Mammary epithelial cell (primary cell): ENCODE measurements at regions of chr18 and their contacts with region 1.

Region 1: GRCh38 chr18:12092398-12093229 is 1.0 kb upstream of the ANKRD62 start:
- DNase-seq: no peak
- H3K4me3 ChIP-seq: no peak overlapping the region
- H3K27ac ChIP-seq: no peak overlapping the region
- H3K4me1 ChIP-seq: no peaks in the 10 kb centered on the region
- H3K27me3 ChIP-seq: no peaks in the 10 kb centered on the region
- CTCF ChIP-seq: peak in 1 of 2 donors; percentile 38

Region 2: DNA sequence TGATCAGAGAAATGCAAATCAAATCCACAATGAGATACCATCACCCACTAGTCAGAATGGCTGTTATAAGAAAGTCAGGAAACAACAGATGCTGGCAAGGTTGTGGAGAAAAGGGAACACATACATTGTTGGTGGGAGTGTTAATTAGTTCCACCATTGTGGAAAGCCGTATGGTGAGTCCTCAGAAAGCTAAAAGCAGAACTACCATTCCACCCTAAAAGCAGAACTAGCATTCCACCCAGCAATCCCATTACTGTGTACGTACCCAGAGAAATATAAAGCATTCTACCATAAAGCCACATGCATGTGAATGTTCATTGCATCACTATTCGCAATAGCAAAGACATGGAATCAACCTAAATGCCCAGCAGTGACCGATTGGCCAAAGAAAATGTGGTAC is 61.7 kb after region 1 on chr18:
- CTCF ChIA-PET with region 1: no interaction called
- dilution Hi-C with region 1: loop called (anchors 5 kb)
- in situ Hi-C with region 1: no loop called
- intact Hi-C with region 1: no loop called
- DNase-seq: no peak
- H3K4me3 ChIP-seq: no peak overlapping the region
- H3K27ac ChIP-seq: no peak overlapping the region
- H3K4me1 ChIP-seq: no peaks in the 10 kb centered on the region
- H3K27me3 ChIP-seq: peaks cover 2% of the 10 kb centered on the region
- CTCF ChIP-seq: no peak

Region 3: DNA sequence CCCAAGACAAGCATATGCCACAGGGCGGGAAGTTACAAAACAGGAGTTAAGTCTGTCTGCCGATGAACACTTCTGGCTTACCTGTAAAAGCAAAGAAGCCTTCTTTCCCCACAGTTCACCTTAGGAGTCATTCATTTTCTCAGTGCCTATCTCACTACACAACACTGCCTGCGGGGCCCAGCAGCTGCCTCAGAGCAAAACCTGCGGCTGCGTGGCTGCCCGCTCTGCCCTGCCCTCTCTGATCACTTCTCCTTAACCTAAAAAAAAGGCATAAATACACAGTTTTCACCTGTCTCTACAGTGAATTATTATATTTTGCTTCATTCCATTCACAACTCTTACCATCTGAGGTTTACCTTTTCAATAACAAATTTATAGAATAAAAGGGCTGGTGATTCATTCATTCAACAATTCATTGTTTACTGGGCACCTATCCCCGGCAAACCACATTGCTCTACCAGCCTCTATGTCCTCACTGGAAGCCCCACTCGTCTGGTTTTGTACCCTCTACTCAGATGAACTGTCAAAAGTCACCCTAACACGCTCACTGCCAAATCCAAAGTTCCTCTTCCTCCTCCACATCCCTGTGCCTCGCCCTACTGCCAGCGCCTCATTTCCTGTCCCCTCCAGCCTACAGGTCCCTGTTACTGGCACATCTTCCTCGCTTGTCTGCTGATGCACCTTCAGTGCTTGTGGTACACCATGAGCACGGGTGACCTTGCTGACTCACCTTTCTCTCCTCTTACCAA is 253.1 kb after region 1 on chr18:
- CTCF ChIA-PET with region 1: no interaction called
- dilution Hi-C with region 1: no loop called
- in situ Hi-C with region 1: no loop called
- intact Hi-C with region 1: no loop called
- DNase-seq: no peak
- H3K4me3 ChIP-seq: no peak overlapping the region
- H3K27ac ChIP-seq: no peak overlapping the region
- H3K4me1 ChIP-seq: no peaks in the 10 kb centered on the region
- H3K27me3 ChIP-seq: no peaks in the 10 kb centered on the region
- CTCF ChIP-seq: no peak